ENCODE measurements at regions of chr10 and their contacts with region 1.

Region 1: DNA sequence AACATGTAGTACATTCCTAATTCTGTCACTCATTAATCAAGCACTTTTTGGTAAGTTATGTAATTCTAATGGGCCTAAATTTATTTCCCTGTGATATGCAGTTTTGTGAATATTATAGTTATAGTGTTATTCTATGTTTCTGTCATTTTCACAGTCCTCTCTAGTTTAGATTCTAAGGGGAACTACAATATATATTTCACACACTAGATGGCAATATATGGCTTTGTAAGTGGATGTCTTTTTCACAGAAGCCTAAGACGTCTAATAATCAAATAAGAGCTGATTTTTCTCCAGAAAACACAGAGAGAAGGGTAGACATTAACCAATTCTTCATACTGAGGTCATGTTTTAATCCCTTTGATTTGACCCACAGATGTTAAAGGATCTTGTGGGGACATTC is 18.0 kb downstream of the RNLS start:
- DNase-seq: peak; percentile 22
- H3K4me3 ChIP-seq: no peak overlapping the region
- H3K27ac ChIP-seq: no peak overlapping the region
- H3K4me1 ChIP-seq: 0 out of 4 replicates have a peak, but pooled peaks cover 0 to 3% of the 10 kb centered on the region in 2 experiments
- H3K27me3 ChIP-seq: no peaks in the 10 kb centered on the region
- CTCF ChIP-seq: peak; percentile 76
- EP300 ChIP-seq: no peak
- RAD21 ChIP-seq: peak; percentile 87

Region 2: GRCh38 chr10:87850742-87851205 is 714.3 kb before region 1 on chr10:
- CTCF ChIA-PET with region 1: interaction called, 15 read pairs
- POLR2A ChIA-PET with region 1: no interaction called
- DNase-seq: peak; percentile 57
- H3K4me3 ChIP-seq: no peak overlapping the region; a peak in 1 of 4 replicates
- H3K27ac ChIP-seq: no peak overlapping the region
- H3K4me1 ChIP-seq: peaks cover 2 to 4% of the 10 kb centered on the region in 2 experiments; a peak in 2 of 4 replicates
- H3K27me3 ChIP-seq: no peaks in the 10 kb centered on the region
- CTCF ChIP-seq: peak; percentile 65
- EP300 ChIP-seq: no peak
- RAD21 ChIP-seq: peak; percentile 90

Region 3: GRCh38 chr10:88579031-88579430 is 14.0 kb after region 1 on chr10:
- CTCF ChIA-PET with region 1: interaction called, 40 read pairs
- POLR2A ChIA-PET with region 1: no interaction called
- DNase-seq: no peak
- H3K4me3 ChIP-seq: no peak overlapping the region
- H3K27ac ChIP-seq: no peak overlapping the region
- H3K4me1 ChIP-seq: no peaks in the 10 kb centered on the region
- H3K27me3 ChIP-seq: no peaks in the 10 kb centered on the region
- CTCF ChIP-seq: no peak
- EP300 ChIP-seq: no peak
- RAD21 ChIP-seq: no peak

Region 4: GRCh38 chr10:88682491-88682890 is 117.4 kb after region 1 on chr10:
- CTCF ChIA-PET with region 1: interaction called, 16 read pairs
- POLR2A ChIA-PET with region 1: no interaction called
- DNase-seq: no peak
- H3K4me3 ChIP-seq: no peak overlapping the region
- H3K27ac ChIP-seq: no peak overlapping the region
- H3K4me1 ChIP-seq: no peaks in the 10 kb centered on the region; a peak in 1 of 4 replicates
- H3K27me3 ChIP-seq: no peaks in the 10 kb centered on the region
- CTCF ChIP-seq: no peak
- EP300 ChIP-seq: no peak
- RAD21 ChIP-seq: no peak

Region 5: DNA sequence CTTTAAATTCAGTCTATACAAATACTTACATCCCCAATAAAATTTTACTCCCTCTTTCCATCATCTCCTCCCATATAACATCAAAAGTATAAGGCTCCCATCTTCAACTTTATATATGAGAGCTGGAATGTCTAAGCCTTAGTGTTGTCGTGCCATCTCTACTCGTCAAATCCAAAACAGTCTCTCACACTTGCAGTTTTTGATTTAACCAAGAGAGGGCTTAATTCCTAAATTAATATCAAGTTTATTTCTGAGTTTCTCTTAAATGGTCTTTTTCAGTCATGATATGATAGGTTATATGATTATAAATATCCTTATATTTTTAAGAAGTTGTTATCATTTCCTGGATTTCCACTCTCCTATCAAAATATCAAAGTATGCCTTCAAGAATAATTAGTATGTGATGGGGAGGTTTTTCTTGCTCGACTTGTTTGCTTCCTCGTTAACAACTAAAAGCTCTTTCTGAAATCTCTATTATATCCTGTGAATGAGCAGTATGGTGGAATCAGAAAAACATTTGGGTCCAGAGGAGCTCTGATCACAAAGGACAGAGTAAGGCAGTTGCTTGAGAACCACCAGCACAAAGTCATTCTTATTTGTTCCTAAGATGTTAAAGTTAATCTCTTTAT is 128.4 kb after region 1 on chr10:
- CTCF ChIA-PET with region 1: interaction called, 16 read pairs
- POLR2A ChIA-PET with region 1: no interaction called
- DNase-seq: no peak
- H3K4me3 ChIP-seq: no peak overlapping the region
- H3K27ac ChIP-seq: no peak overlapping the region
- H3K4me1 ChIP-seq: no peaks in the 10 kb centered on the region
- H3K27me3 ChIP-seq: no peaks in the 10 kb centered on the region
- CTCF ChIP-seq: peak; percentile 45
- EP300 ChIP-seq: no peak
- RAD21 ChIP-seq: no peak

Region 6: GRCh38 chr10:88828310-88828709 is 263.2 kb after region 1 on chr10:
- CTCF ChIA-PET with region 1: interaction called, 11 read pairs
- POLR2A ChIA-PET with region 1: no interaction called
- DNase-seq: no peak
- H3K4me3 ChIP-seq: no peak overlapping the region
- H3K27ac ChIP-seq: no peak overlapping the region
- H3K4me1 ChIP-seq: peaks cover 0 to 2% of the 10 kb centered on the region in 2 experiments; a peak in 1 of 4 replicates
- H3K27me3 ChIP-seq: no peaks in the 10 kb centered on the region
- CTCF ChIP-seq: no peak
- EP300 ChIP-seq: no peak
- RAD21 ChIP-seq: no peak